ENCODE measurements at regions of chr10 and their contacts with region 1.

Region 1: GRCh38 chr10:68957654-68958053 is 1.7 kb downstream of the DDX21 start:
- DNase-seq: peak; percentile 33
- ATAC-seq: no peak
- H3K4me3 ChIP-seq: peak overlapping the region; percentile 77
- H3K27ac ChIP-seq: 0 out of 2 replicates have a peak overlapping the region, but pooled peaks have one; percentile 75
- H3K4me1 ChIP-seq: peaks cover 9% of the 10 kb centered on the region
- H3K27me3 ChIP-seq: no peaks in the 10 kb centered on the region
- CTCF ChIP-seq: no peak

Region 2: GRCh38 chr10:67884313-67884841 is 1073.3 kb before region 1 on chr10 and contains the start of gene SIRT1:
- CTCF ChIA-PET with region 1: no interaction called
- POLR2A ChIA-PET with region 1: no interaction called
- intact Hi-C with region 1: no loop called
- DNase-seq: peak; percentile 99
- ATAC-seq: peak; percentile 77
- H3K4me3 ChIP-seq: peak within 1 kb of the TSS; percentile 75
- H3K27ac ChIP-seq: peak within 1 kb of the TSS; percentile 43
- H3K4me1 ChIP-seq: peaks cover 16% of the 10 kb centered on the region
- H3K27me3 ChIP-seq: no peaks in the 10 kb centered on the region
- CTCF ChIP-seq: 0 out of 2 replicates have a peak, but pooled peaks have one; percentile 21
- total RNA-seq, gene SIRT1: 20.4 and 20.8 TPM in 2 replicates

Region 3: DNA sequence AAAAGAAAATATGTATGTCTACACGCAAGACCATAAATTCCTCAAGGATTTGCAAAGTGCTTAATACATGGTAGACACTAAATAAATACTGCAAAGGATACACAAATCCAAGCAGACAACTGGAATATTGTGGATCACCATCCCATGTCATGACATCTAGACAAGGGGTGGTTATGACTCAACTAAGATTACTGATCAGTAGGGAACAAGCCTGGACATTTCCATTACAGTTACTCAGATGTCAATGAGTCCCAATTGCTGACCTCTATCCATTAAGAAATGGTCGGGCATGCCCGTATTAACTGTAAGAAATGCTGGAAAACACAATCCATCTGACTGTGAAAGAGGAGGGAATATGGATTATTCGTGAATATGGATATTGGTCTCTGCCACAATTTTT is 523.0 kb before region 1 on chr10:
- CTCF ChIA-PET with region 1: no interaction called
- POLR2A ChIA-PET with region 1: no interaction called
- intact Hi-C with region 1: no loop called
- DNase-seq: no peak
- ATAC-seq: no peak
- H3K4me3 ChIP-seq: no peak overlapping the region
- H3K27ac ChIP-seq: no peak overlapping the region
- H3K4me1 ChIP-seq: no peaks in the 10 kb centered on the region
- H3K27me3 ChIP-seq: no peaks in the 10 kb centered on the region
- CTCF ChIP-seq: no peak

Region 4: GRCh38 chr10:68988530-68989316 is 31.1 kb after region 1 on chr10 and contains the start of gene KIFBP:
- CTCF ChIA-PET with region 1: no interaction called
- POLR2A ChIA-PET with region 1: no interaction called
- intact Hi-C with region 1: loop called (anchors 1 kb)
- DNase-seq: peak; percentile 99
- ATAC-seq: peak; percentile 85
- H3K4me3 ChIP-seq: peak within 1 kb of the TSS; percentile 80
- H3K27ac ChIP-seq: peak within 1 kb of the TSS; percentile 51
- H3K4me1 ChIP-seq: peaks cover 37% of the 10 kb centered on the region
- H3K27me3 ChIP-seq: no peaks in the 10 kb centered on the region
- CTCF ChIP-seq: peak; percentile 73
- total RNA-seq, gene KIFBP: 65.9 and 72.9 TPM in 2 replicates